Common myeloid progenitor, CD34-positive (primary cell): ENCODE measurements at regions of chr20 and their contacts with region 1.

Region 1: GRCh38 chr20:34312544-34313217 is 9.5 kb upstream of the AHCY start:
- DNase-seq: peak; percentile 84 to 91 (median 88)
- H3K4me3 ChIP-seq: peak overlapping the region in 6 of 7 experiments; percentile 2 to 74 (median 52)
- H3K27ac ChIP-seq: no peak overlapping the region
- H3K4me1 ChIP-seq: peaks cover 0 to 16% (median 13%) of the 10 kb centered on the region in 4 experiments
- H3K27me3 ChIP-seq: peaks cover 2 to 11% (median 9%) of the 10 kb centered on the region in 5 experiments

Region 2: DNA sequence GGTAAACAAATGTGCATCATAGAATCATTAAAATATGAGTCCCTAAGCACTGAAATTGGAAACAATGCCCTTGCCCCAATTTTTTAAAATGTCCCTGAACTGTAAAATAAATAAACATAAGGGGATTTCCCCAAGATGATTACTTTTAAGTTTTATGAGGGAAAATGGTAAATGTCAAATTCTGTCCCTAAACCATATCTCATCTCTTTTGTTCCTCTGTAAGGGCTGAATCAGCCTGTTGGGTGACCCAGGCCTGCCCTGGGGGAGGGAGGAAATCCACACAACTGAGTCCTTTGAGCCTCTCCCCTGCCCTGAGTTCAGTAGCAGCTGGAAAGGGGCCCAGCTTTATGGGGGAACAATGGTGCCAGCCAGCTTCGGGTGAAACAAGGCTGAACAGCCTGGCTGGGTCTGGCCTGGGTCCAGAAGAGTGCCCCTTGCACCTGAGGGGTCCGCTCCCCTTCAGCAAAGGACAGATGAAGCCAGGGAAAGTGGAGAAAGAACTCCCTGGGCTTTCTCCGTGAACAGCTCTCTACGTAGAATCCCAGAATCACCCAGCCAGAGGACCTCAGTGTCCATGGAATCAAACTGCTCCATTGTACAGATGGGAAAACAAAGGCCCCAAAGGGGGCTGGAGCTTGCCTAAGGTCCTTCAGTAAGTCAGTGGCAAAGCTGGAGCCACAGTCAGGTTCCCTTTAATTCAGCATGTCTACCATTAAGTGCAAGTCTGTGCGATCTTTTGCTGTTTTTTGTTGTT is 22.1 kb after region 1 on chr20:
- CTCF ChIA-PET with region 1: interaction called, 48 read pairs
- POLR2A ChIA-PET with region 1: no interaction called
- DNase-seq: no peak
- H3K4me3 ChIP-seq: no peak overlapping the region
- H3K27ac ChIP-seq: no peak overlapping the region
- H3K4me1 ChIP-seq: no peaks in the 10 kb centered on the region
- H3K27me3 ChIP-seq: no peaks in the 10 kb centered on the region

Region 3: GRCh38 chr20:34437330-34437986 is 124.8 kb after region 1 on chr20:
- CTCF ChIA-PET with region 1: interaction called, 10 read pairs
- POLR2A ChIA-PET with region 1: no interaction called
- DNase-seq: peak in 1 of 3 donors; percentile 14
- H3K4me3 ChIP-seq: peak overlapping the region in 2 of 7 experiments; percentile 25 to 38
- H3K27ac ChIP-seq: peak overlapping the region in 1 of 2 experiments; percentile 40
- H3K4me1 ChIP-seq: peaks cover 2 to 19% (median 14%) of the 10 kb centered on the region in 4 experiments
- H3K27me3 ChIP-seq: no peaks in the 10 kb centered on the region

Region 4: DNA sequence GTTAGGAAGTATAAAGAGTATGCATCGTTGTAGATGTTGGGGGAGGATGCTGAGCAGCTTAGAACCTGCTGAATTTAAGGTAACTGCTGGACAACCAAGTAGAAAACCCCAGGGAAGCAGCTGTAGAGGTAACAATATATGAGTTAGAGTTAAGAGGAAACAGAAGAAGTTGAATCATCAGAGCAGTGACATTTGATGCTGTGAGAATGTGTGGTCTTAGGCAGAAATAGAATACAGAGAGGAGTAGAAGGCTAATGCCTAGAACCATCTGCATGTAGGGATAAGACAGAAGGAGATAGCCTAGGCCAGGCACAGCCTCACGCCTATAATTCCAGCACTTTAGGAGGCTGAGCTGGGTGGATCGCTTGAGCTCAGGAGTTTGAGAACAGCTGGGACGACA is 181.0 kb after region 1 on chr20:
- CTCF ChIA-PET with region 1: interaction called, 13 read pairs
- POLR2A ChIA-PET with region 1: no interaction called
- DNase-seq: no peak
- H3K4me3 ChIP-seq: no peak overlapping the region
- H3K27ac ChIP-seq: no peak overlapping the region
- H3K4me1 ChIP-seq: no peaks in the 10 kb centered on the region
- H3K27me3 ChIP-seq: no peaks in the 10 kb centered on the region

Region 5: GRCh38 chr20:34522969-34523871 is 210.5 kb after region 1 on chr20:
- CTCF ChIA-PET with region 1: interaction called, 68 read pairs
- POLR2A ChIA-PET with region 1: interaction called, 3 read pairs
- DNase-seq: peak; percentile 58 to 79 (median 76)
- H3K4me3 ChIP-seq: peak overlapping the region in 1 of 7 experiments; percentile 42
- H3K27ac ChIP-seq: no peak overlapping the region
- H3K4me1 ChIP-seq: peaks cover 0 to 6% (median 3%) of the 10 kb centered on the region in 4 experiments
- H3K27me3 ChIP-seq: no peaks in the 10 kb centered on the region